HCT116 (cell line): ENCODE measurements at regions of chr14 and their contacts with region 1.

Region 1: GRCh38 chr14:94548999-94549985 is 11.9 kb upstream of the SERPINA4 start:
- DNase-seq: peak; percentile 28
- ATAC-seq: peak; percentile 98
- H3K4me3 ChIP-seq: no peak overlapping the region
- H3K27ac ChIP-seq: no peak overlapping the region
- H3K4me1 ChIP-seq: peaks cover 0 to 10% of the 10 kb centered on the region in 2 experiments; a peak in 2 of 4 replicates
- H3K27me3 ChIP-seq: no peaks in the 10 kb centered on the region
- CTCF ChIP-seq: peak; percentile 89 to 94 (median 91)
- POLR2A ChIP-seq: no peak
- RAD21 ChIP-seq: peak; percentile 79

Region 2: DNA sequence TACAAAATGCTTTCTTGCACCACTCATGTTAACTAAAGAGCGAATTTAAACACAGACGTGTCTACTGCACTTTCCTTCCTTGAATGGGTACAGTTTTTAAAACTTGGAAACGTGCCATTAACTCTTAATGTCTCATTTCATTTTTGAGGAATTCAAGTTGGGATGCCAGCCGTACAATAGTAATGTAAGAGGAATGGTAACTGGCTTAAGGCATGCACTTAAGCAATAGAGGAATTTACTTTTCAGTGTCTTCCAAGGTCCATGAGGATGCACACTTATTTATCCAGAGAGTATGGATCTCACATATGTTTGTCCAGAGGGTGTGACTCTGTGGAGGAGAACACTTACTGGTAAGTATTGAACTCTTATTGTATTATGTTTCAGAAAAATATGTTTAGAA is 322.3 kb before region 1 on chr14:
- CTCF ChIA-PET with region 1: no interaction called
- POLR2A ChIA-PET with region 1: no interaction called
- RAD21 ChIA-PET with region 1: no interaction called
- intact Hi-C with region 1: no loop called
- DNase-seq: no peak
- ATAC-seq: no peak
- H3K4me3 ChIP-seq: no peak overlapping the region
- H3K27ac ChIP-seq: no peak overlapping the region
- H3K4me1 ChIP-seq: no peaks in the 10 kb centered on the region
- H3K27me3 ChIP-seq: no peaks in the 10 kb centered on the region
- CTCF ChIP-seq: no peak
- POLR2A ChIP-seq: no peak
- RAD21 ChIP-seq: no peak

Region 3: DNA sequence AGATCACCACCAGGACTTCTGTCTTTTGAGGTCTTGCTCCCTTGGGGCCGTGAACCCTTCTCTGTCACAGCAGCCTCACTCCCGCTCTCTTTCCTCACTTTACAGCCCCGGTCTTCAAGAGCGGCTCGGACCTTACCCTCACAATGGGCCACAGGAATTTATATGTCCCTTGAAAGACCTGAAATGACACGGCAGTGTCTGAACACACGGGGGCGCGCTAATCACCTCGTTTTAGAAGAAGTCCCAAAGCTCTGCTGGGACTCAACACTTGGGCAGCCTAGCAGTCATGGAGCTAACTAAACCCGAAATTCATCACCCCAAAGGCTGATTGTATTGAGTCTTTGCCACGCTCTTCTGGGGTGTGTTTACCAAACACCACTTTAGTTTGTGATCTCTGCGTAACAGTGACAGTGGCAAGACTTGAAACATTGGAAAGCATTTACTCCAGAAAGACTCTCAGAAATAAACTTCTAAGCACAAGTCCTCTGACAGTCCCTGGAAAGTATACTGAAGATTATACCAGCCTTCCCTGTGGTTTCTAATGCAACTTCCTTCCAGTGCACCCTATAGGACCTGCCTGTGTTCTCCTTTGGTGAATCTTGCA is 125.7 kb before region 1 on chr14:
- CTCF ChIA-PET with region 1: interaction called, 17 read pairs
- POLR2A ChIA-PET with region 1: no interaction called
- RAD21 ChIA-PET with region 1: interaction called in 1 of 2 experiments, 4 read pairs
- intact Hi-C with region 1: no loop called
- DNase-seq: peak; percentile 75
- ATAC-seq: peak; percentile 99
- H3K4me3 ChIP-seq: no peak overlapping the region
- H3K27ac ChIP-seq: no peak overlapping the region
- H3K4me1 ChIP-seq: peaks cover 0 to 6% of the 10 kb centered on the region in 2 experiments; a peak in 1 of 4 replicates
- H3K27me3 ChIP-seq: peaks cover 10% of the 10 kb centered on the region
- CTCF ChIP-seq: peak; percentile 80 to 83 (median 82)
- POLR2A ChIP-seq: no peak
- RAD21 ChIP-seq: peak; percentile 74

Region 4: GRCh38 chr14:94428610-94429009 is 120.7 kb before region 1 on chr14:
- CTCF ChIA-PET with region 1: interaction called, 32 read pairs
- POLR2A ChIA-PET with region 1: no interaction called
- RAD21 ChIA-PET with region 1: interaction called, 5 to 10 read pairs
- intact Hi-C with region 1: no loop called
- DNase-seq: no peak
- ATAC-seq: no peak
- H3K4me3 ChIP-seq: no peak overlapping the region
- H3K27ac ChIP-seq: no peak overlapping the region
- H3K4me1 ChIP-seq: peaks cover 0 to 2% of the 10 kb centered on the region in 2 experiments; a peak in 1 of 4 replicates
- H3K27me3 ChIP-seq: peaks cover 10% of the 10 kb centered on the region
- CTCF ChIP-seq: no peak
- POLR2A ChIP-seq: no peak
- RAD21 ChIP-seq: no peak

Region 5: DNA sequence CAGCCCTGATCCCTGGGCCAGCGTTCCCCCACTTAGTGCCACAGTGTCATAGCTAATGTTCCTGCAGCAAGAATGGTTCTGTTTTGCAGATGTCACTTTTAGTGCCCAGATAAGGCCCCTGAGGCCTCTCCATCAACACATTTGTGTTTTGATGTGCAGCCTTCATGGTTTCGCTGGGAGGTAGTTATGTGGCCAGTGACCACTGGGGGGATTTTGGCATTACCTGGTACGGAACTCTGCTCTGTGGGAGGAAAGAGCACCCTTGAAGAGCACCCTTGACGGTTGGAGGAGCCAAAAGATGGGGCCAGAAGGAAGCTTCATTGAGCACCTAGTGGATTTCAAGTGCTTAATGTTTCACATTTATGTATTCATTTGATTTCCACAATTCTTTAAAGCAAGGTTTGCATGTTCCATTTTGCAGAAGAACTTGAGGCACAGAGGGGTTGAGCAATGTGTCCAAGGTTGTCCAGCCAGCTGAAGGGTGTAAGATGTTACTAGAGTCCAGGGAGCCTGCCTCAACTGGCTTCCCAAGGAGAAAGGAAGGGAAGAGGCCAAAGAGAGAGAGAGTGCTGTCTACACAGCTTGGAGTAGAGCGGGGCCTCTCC is 109.7 kb before region 1 on chr14:
- CTCF ChIA-PET with region 1: no interaction called
- POLR2A ChIA-PET with region 1: no interaction called
- RAD21 ChIA-PET with region 1: no interaction called
- intact Hi-C with region 1: loop called (anchors 2 kb)
- DNase-seq: no peak
- ATAC-seq: peak; percentile 52
- H3K4me3 ChIP-seq: no peak overlapping the region
- H3K27ac ChIP-seq: no peak overlapping the region
- H3K4me1 ChIP-seq: no peaks in the 10 kb centered on the region
- H3K27me3 ChIP-seq: no peaks in the 10 kb centered on the region; the same call in 1 of the 2 replicates
- CTCF ChIP-seq: peak in 2 of 3 experiments; percentile 23 to 30; a peak in 3 of 6 replicates
- POLR2A ChIP-seq: no peak
- RAD21 ChIP-seq: no peak

Region 6: GRCh38 chr14:94536823-94537222 is 12.5 kb before region 1 on chr14:
- CTCF ChIA-PET with region 1: interaction called, 14 read pairs
- POLR2A ChIA-PET with region 1: no interaction called
- RAD21 ChIA-PET with region 1: no interaction called
- intact Hi-C with region 1: no loop called
- DNase-seq: peak; percentile 74
- ATAC-seq: peak; percentile 93
- H3K4me3 ChIP-seq: no peak overlapping the region
- H3K27ac ChIP-seq: no peak overlapping the region
- H3K4me1 ChIP-seq: peaks cover 0 to 12% of the 10 kb centered on the region in 2 experiments; a peak in 2 of 4 replicates
- H3K27me3 ChIP-seq: no peaks in the 10 kb centered on the region
- CTCF ChIP-seq: peak; percentile 44 to 57 (median 57); a peak in 5 of 6 replicates
- POLR2A ChIP-seq: no peak
- RAD21 ChIP-seq: peak; percentile 66

Region 7: DNA sequence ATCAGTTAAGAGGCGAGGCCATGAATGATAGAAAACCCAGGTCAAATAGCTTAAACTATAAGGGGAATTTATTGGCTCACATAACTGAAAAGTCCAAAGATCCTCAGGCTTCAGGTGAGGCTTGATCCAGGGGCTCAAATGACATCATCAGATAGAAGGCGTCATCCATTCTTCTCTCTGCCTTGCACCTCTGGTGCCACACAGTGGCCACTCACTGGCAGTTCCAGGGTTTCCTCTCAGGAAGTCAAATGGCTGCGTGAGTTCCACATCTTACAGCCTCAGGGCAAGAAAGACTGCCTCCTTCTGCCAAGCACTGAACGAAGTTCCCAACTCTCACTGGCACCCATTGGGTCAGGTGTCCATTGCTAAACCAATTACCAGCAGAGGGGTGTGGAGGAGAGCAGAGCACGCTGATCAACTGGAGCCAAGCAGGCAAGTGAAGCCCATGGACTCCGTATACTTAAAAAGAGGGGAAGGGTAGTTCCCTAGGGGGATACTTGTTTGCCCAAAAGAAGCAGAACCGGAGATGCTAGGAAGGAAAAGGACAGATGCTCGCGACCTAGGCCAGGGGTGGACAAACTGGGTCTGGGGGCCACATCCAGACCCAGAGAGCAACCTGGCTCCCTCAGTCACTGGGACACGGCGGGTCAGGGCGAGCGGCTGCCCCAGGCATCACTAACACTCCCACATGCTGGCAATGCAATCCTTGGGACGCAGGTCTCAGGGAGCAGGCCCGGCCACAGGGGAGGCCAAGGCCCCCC is 132.2 kb after region 1 on chr14:
- CTCF ChIA-PET with region 1: interaction called, 4 read pairs
- POLR2A ChIA-PET with region 1: no interaction called
- RAD21 ChIA-PET with region 1: no interaction called
- intact Hi-C with region 1: loop called (anchors 2 kb)
- DNase-seq: peak; percentile 74
- ATAC-seq: peak; percentile 95
- H3K4me3 ChIP-seq: no peak overlapping the region
- H3K27ac ChIP-seq: no peak overlapping the region
- H3K4me1 ChIP-seq: peaks cover 0 to 4% of the 10 kb centered on the region in 2 experiments; a peak in 1 of 4 replicates
- H3K27me3 ChIP-seq: no peaks in the 10 kb centered on the region
- CTCF ChIP-seq: peak; percentile 88 to 95 (median 93)
- POLR2A ChIP-seq: no peak
- RAD21 ChIP-seq: peak; percentile 95